Panc1 (cell line): ENCODE measurements at regions of chr1 and their contacts with region 1.

Region 1: DNA sequence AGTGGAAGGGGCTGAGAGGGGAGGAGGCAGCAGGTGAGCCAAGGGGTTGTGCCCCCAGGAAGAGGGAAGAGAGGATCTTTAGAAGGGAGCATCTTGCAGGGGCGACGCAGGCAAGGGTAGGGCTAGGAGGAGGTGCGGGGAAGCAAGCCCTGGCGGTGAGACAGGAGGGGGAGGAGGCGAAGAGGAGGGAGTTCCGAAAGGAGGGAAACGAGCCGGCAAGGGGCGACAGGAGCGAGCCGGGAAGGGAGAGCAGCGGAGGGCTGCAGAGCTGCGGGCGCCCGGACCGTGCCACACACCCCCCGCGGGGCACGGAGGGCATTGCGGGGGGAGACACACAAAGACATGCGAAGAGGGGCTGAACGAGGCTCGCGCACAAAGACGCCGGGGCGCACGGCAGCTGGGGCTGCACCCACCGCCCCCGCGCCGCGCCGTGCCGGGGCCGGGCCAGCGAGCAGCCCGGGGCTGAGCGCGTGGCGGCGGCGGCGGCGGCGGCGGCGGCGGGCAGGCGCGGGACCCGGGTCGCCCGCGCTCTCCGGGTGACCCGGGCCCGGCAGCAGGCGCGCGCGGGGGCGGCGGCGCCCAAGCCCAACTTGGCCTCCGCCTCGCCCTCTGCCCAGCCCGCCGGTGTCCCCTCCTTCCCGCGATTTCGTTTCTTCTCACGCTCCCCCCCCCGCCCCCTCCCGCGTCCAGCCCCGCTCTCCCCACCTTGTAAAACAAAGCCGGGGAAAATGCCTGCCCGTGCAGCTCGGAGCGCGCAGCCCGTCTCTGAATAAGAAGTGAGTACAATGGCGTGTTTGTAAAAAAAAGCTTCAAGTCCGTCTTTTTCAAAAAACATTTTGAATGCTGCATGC is at the start of gene KCNK2:
- DNase-seq: no peak
- ATAC-seq: peak; percentile 77
- H3K4me3 ChIP-seq: peak within 1 kb of the TSS; percentile 37 to 48
- H3K27ac ChIP-seq: no peak within 1 kb of the TSS
- H3K4me1 ChIP-seq: no peaks in the 10 kb centered on the region; the same call in 1 of the 2 replicates
- H3K27me3 ChIP-seq: peaks cover 57% of the 10 kb centered on the region
- CTCF ChIP-seq: no peak
- total RNA-seq, gene KCNK2: 0.28 TPM

Region 2: GRCh38 chr1:214685906-214686305 is 396.9 kb before region 1 on chr1:
- CTCF ChIA-PET with region 1: no interaction called
- POLR2A ChIA-PET with region 1: interaction called, 15 read pairs
- in situ Hi-C with region 1: no loop called
- intact Hi-C with region 1: no loop called
- DNase-seq: no peak
- ATAC-seq: no peak
- H3K4me3 ChIP-seq: no peak overlapping the region
- H3K27ac ChIP-seq: no peak overlapping the region
- H3K4me1 ChIP-seq: no peaks in the 10 kb centered on the region
- H3K27me3 ChIP-seq: no peaks in the 10 kb centered on the region
- CTCF ChIP-seq: no peak

Region 3: DNA sequence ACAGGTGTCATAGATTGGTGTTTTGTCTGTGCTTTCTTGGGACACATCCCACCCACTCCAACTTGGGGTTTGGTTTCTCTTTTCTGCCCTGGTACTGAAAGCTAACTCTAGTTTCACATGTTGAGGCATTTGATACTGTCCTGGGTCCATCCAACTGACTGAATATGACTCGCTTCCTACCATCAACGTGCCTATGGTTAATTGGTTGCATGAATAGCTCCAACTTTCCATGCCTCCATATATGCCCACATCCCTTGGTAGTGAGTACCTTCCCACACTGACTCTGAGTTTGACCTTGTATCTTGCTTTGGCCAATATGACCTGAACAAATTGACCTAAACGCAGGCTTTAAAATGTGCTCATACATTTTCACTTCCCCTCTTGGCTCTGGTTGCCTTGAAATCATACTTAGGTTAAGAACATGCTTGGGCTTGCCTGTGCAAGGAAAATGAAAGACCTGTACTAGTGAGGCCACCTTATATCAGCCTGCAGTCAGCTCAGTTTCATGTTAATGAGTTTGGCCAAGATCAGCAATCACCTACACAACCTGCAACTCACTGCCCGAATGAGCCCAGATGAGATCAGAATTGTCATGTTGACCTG is 81.2 kb before region 1 on chr1:
- CTCF ChIA-PET with region 1: no interaction called
- POLR2A ChIA-PET with region 1: no interaction called
- in situ Hi-C with region 1: no loop called
- intact Hi-C with region 1: no loop called
- DNase-seq: no peak
- ATAC-seq: no peak
- H3K4me3 ChIP-seq: no peak overlapping the region
- H3K27ac ChIP-seq: no peak overlapping the region
- H3K4me1 ChIP-seq: no peaks in the 10 kb centered on the region
- H3K27me3 ChIP-seq: no peaks in the 10 kb centered on the region
- CTCF ChIP-seq: no peak